HEK293T (cell line): ENCODE measurements at regions of chr18 and their contacts with region 1.

Region 1: DNA sequence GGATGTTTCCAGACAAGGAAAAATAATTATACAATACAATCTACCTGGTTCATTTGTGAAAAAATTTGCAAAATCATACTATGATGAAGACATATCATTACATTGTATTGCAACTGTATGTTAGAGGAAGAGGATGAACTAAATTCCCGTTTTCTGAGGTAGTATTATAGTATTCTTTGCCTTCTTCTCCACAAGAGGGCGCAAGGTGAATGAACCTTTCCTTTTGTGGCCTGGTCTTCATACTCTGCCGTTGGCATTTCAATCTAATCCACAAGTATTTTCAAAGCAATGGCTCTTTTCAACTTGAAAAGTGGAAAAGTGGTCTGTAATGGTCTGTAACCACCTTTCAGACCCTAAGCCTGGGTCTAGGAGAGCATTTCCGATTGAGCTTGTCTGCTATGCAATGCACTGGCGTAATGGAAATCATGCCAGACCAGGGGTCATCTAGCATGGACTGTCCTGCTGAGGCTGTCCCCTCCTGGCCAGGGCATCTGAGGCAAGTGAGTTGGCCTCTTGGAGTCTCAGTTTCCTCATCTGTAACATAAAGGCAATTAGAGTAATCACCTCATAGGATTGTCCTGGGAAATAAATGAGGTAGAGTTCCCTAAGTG is 30.8 kb upstream of the ZNF396 start:
- DNase-seq: peak; percentile 82

Region 2: GRCh38 chr18:35153609-35154272 is 254.2 kb before region 1 on chr18:
- CTCF ChIA-PET with region 1: interaction called, 10 read pairs
- POLR2A ChIA-PET with region 1: no interaction called
- DNase-seq: no peak